CD8-positive, alpha-beta T cell (primary cell): ENCODE measurements at regions of chr19 and their contacts with region 1.

Region 1: GRCh38 chr19:1540365-1540925 is 16.6 kb downstream of the PLK5 start:
- DNase-seq: no peak
- ATAC-seq: no peak
- H3K4me3 ChIP-seq: no peak overlapping the region
- H3K4me3 Mint-ChIP-seq: no peak overlapping the region
- H3K27ac ChIP-seq: no peak overlapping the region
- H3K27ac Mint-ChIP-seq: no peak overlapping the region
- H3K4me1 ChIP-seq: no peaks in the 10 kb centered on the region
- H3K4me1 Mint-ChIP-seq: no peaks in the 10 kb centered on the region
- H3K27me3 ChIP-seq: peaks cover under 1 to 7% of the 10 kb centered on the region in 2 experiments
- H3K27me3 Mint-ChIP-seq: peaks cover 25% of the 10 kb centered on the region
- CTCF ChIP-seq: no peak

Region 2: DNA sequence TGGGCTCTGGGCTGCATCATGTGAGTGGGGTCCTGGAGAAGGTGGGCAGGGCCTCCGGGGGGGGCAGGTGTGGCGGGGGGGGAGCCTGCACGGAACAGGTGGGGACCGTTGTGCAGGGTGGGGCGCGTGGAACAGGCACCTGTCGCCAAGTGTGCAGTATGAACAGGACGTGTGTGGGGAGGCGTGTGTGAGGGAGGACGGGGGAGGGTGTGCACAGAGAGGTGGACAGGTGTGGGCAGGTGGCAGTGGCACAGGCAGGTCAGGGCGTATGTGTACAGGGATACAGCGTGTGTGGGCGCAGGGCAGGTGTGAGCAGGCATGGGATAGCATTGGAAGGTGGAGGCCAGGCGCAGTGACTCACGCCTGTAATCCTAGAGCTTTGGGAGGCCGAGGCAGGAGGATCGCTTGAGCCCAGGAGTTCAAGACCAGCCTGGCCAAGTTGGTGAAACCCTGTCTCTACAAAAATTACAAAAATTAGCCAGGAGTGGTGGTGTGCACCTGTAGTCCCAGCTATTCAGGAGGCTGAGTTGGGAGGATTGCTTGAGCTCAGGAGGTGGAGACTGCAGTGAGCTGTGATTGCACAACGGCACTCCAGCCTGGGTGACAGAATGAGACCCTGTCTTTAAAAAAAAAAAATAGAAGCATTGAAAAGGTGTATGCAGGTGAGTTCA is 13.3 kb before region 1 on chr19:
- CTCF ChIA-PET with region 1: no interaction called
- POLR2A ChIA-PET with region 1: no interaction called
- intact Hi-C with region 1: no loop called
- DNase-seq: no peak
- ATAC-seq: no peak
- H3K4me3 ChIP-seq: no peak overlapping the region
- H3K4me3 Mint-ChIP-seq: no peak overlapping the region
- H3K27ac ChIP-seq: no peak overlapping the region
- H3K27ac Mint-ChIP-seq: no peak overlapping the region
- H3K4me1 ChIP-seq: no peaks in the 10 kb centered on the region
- H3K4me1 Mint-ChIP-seq: peaks cover 7% of the 10 kb centered on the region
- H3K27me3 ChIP-seq: peaks cover 12 to 14% of the 10 kb centered on the region in 2 experiments
- H3K27me3 Mint-ChIP-seq: peaks cover 43% of the 10 kb centered on the region
- CTCF ChIP-seq: no peak

Region 3: GRCh38 chr19:1789261-1790041 is 249.0 kb after region 1 on chr19:
- CTCF ChIA-PET with region 1: no interaction called
- POLR2A ChIA-PET with region 1: no interaction called
- intact Hi-C with region 1: loop called in 1 of 2 experiments (anchors 10 kb)
- DNase-seq: no peak
- ATAC-seq: no peak
- H3K4me3 ChIP-seq: no peak overlapping the region
- H3K4me3 Mint-ChIP-seq: no peak overlapping the region
- H3K27ac ChIP-seq: no peak overlapping the region
- H3K27ac Mint-ChIP-seq: no peak overlapping the region
- H3K4me1 ChIP-seq: no peaks in the 10 kb centered on the region
- H3K4me1 Mint-ChIP-seq: no peaks in the 10 kb centered on the region
- H3K27me3 ChIP-seq: peaks cover 0 to 5% of the 10 kb centered on the region in 2 experiments
- H3K27me3 Mint-ChIP-seq: peaks cover 10% of the 10 kb centered on the region
- CTCF ChIP-seq: no peak